Mucosa of descending colon (tissue), 3 donors: ENCODE measurements at regions of chr9 and their contacts with region 1.

Region 1: DNA sequence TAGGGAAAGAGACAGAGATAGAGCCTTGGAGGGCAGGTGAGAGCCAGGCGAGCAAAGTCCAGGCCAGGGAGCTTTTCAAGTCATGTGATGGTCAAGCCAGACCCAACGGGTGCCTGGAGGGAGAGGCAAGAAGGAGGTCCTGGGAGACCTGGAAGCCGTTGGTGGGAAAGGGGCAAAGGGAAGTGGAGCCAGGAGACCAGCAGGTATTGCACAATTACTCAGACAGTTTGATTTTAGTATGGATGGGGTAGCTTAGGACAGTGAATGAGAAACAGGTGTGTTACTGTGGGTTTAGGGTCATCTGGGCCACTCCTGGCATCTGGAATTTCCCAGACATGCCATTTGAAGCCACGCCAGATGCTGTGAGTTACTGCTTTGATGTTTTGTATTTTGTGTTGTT is 5.1 kb downstream of the SECISBP2 start:
- DNase-seq: no peak
- ATAC-seq: no peak
- H3K4me3 ChIP-seq: no peak overlapping the region
- H3K4me1 ChIP-seq: peaks cover 6% of the 10 kb centered on the region
- CTCF ChIP-seq: no peak

Region 2: DNA sequence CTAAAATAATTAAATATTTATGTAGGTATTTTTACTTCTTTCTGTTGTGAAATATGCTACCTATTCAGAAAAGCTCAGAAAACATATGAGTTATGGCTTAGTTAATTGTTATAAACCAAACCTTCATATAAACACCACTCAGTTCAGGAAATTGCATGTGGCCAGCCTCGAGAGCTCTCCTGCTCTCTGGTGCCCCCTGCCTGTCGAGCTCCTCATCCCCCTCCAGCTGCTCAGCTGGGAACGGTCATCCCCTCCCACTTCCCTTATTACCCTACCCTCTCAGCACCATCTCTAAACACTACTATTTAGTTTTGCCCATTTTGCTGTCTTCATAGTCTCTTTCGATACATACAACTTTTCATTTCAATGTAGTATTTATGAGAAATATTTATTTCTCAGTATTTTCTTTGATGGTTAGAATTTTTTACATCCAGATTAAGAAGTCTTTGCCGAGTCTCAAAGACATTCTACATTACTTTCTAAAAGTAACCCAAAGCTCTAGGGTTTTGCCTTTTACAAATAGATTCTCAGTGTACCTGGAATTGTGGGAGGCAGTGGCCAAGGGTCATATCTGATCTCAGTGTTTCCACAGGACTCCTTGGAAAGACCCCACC is 225.7 kb after region 1 on chr9:
- intact Hi-C with region 1: loop called (anchors 5 to 10 kb)
- DNase-seq: peak; percentile 86 to 92 (median 90)
- ATAC-seq: peak; percentile 99
- H3K4me3 ChIP-seq: no peak overlapping the region
- H3K4me1 ChIP-seq: no peaks in the 10 kb centered on the region
- CTCF ChIP-seq: peak; percentile 88

Region 3: GRCh38 chr9:89555451-89556375 is 232.3 kb after region 1 on chr9:
- intact Hi-C with region 1: loop called in 1 of 2 experiments (anchors 10 kb)
- DNase-seq: no peak
- ATAC-seq: peak; percentile 26
- H3K4me3 ChIP-seq: no peak overlapping the region
- H3K4me1 ChIP-seq: peaks cover 5% of the 10 kb centered on the region
- CTCF ChIP-seq: no peak

Region 4: DNA sequence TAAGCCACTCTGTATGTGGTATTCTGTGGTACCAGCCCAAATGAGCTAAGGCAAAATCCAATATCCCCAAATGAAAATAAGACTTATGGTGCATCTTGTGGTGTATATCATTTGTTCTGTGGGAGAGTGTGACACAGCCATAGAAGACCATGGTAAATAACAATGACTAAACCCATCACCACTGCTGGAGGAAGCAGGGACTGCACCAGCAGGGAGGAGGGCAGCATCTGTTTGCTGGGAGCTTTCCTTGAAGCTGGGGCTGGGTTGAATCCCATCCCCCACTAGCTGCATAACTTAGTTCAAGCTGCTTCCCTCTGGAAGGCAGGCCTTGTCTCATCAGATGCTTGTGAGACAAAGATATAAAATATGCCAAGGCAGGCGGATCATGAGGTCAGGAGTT is 295.6 kb after region 1 on chr9:
- intact Hi-C with region 1: no loop called
- DNase-seq: no peak
- ATAC-seq: no peak
- H3K4me3 ChIP-seq: no peak overlapping the region
- H3K4me1 ChIP-seq: no peaks in the 10 kb centered on the region
- CTCF ChIP-seq: no peak